ENCODE measurements at regions of chr11 and their contacts with region 1.

Region 1: DNA sequence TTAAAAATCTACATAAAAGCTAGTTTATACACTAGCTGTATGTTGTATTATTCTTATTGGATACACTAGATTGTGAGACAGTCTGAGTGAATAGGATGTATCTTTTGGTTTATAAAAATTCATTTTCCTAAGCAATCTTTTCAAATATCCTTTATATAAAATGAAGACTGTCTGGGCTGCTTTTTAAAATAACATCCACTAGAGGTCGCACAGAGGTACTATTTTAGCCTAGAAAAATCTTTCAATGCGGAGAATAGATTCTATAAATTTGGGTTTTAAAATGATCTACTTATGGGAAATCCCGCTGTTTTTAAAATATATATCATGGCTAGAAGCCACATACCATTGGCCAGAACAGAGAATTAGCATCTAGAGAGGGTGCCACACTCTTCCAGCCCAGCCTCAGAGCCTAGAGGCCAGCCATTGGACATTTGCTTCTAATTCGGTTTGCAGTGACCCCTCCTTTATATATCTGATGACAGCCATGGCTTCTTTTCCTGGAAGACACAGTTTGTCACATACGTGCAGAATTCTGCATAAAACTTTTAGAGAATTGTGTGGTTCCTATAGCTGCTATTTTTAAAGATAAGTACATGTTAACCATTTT is 7.3 kb downstream of the C11orf97 start:
- DNase-seq: peak in 4 of 9 donors; percentile 18 to 41 (median 26)
- ATAC-seq: peak; percentile 70
- H3K4me3 ChIP-seq: no peak overlapping the region
- H3K4me3 Mint-ChIP-seq: no peak overlapping the region
- H3K27ac ChIP-seq: no peak overlapping the region
- H3K27ac Mint-ChIP-seq: no peak overlapping the region
- H3K4me1 ChIP-seq: no peaks in the 10 kb centered on the region
- H3K4me1 Mint-ChIP-seq: no peaks in the 10 kb centered on the region
- H3K27me3 ChIP-seq: no peaks in the 10 kb centered on the region
- H3K27me3 Mint-ChIP-seq: peaks cover 15 to 40% (median 21%) of the 10 kb centered on the region in 5 donors

Region 2: GRCh38 chr11:93668171-93668570 is 851.4 kb before region 1 on chr11:
- CTCF ChIA-PET with region 1: no interaction called
- POLR2A ChIA-PET with region 1: no interaction called
- intact Hi-C with region 1: no loop called
- DNase-seq: no peak
- ATAC-seq: no peak
- H3K4me3 ChIP-seq: no peak overlapping the region
- H3K4me3 Mint-ChIP-seq: no peak overlapping the region
- H3K27ac ChIP-seq: no peak overlapping the region
- H3K27ac Mint-ChIP-seq: peak overlapping the region in 2 of 9 donors; percentile 18 to 25
- H3K4me1 ChIP-seq: no peaks in the 10 kb centered on the region
- H3K4me1 Mint-ChIP-seq: peaks cover 5 to 34% (median 17%) of the 10 kb centered on the region in 7 donors
- H3K27me3 ChIP-seq: no peaks in the 10 kb centered on the region
- H3K27me3 Mint-ChIP-seq: no peaks in the 10 kb centered on the region

Region 3: GRCh38 chr11:94543695-94544645 is 24.4 kb after region 1 on chr11 and contains the start of gene FUT4:
- CTCF ChIA-PET with region 1: no interaction called
- POLR2A ChIA-PET with region 1: no interaction called
- intact Hi-C with region 1: loop called (anchors 1 to 2 kb)
- DNase-seq: peak; percentile 51 to 83 (median 70)
- ATAC-seq: peak; percentile 84
- H3K4me3 ChIP-seq: peak within 1 kb of the TSS; percentile 85
- H3K4me3 Mint-ChIP-seq: peak within 1 kb of the TSS; percentile 93 to 100 (median 98)
- H3K27ac ChIP-seq: peak within 1 kb of the TSS; percentile 88
- H3K27ac Mint-ChIP-seq: peak within 1 kb of the TSS; percentile 96 to 100 (median 99)
- H3K4me1 ChIP-seq: peaks cover 22 to 29% of the 10 kb centered on the region in 2 donors
- H3K4me1 Mint-ChIP-seq: peaks cover 24 to 49% (median 41%) of the 10 kb centered on the region in 7 donors
- H3K27me3 ChIP-seq: no peaks in the 10 kb centered on the region
- H3K27me3 Mint-ChIP-seq: no peaks in the 10 kb centered on the region
- total RNA-seq, gene FUT4: 5.6 to 10.2 (median 6.9) TPM

Region 4: DNA sequence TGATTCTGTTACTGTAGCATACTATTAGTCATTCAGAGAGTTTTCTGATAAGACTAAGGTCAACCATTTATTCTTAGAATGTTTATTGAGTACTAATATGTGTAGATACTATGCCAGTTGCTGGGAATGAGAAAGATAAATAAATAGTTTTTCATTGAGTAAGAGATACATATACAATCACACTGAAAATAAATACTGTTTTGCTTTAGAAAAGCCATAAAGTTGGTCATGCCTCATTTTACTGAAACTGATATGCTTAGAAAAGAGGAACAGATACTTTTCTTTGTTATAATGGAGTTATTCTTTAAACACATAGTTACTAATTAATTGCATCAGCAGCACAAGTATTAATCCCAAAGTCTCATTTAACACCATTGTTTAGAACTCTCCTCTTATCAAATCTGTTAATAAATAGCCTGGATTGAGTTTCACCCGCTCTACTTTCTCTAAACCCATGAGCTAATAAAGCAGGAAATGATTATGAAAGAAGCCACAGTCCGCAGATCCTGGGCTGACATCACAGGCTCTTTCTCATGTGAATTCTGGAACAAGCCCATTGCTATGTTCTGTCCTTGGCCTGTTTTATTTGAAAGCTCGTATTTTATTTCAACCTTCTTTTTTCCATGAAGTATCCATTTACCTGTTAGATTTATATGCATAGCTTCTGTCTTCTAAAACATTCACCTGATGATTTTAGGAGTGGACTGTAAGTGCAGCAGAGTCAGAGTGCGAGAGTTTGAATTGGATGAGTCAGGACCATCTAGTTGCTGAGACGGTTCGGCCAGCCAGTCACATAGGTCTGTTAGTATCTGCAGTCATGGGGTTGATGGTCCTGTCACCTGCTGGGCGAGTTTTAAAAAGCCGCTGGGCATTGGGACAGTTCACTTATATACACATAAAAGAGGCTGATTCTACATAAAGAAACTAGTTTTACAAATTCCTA is 83.1 kb after region 1 on chr11:
- CTCF ChIA-PET with region 1: no interaction called
- POLR2A ChIA-PET with region 1: no interaction called
- intact Hi-C with region 1: loop called (anchors 1 kb)
- DNase-seq: peak in 4 of 9 donors; percentile 6 to 29 (median 20)
- ATAC-seq: peak; percentile 91
- H3K4me3 ChIP-seq: no peak overlapping the region
- H3K4me3 Mint-ChIP-seq: no peak overlapping the region
- H3K27ac ChIP-seq: no peak overlapping the region
- H3K27ac Mint-ChIP-seq: no peak overlapping the region
- H3K4me1 ChIP-seq: no peaks in the 10 kb centered on the region
- H3K4me1 Mint-ChIP-seq: peaks cover 0 to 5% (median 0%) of the 10 kb centered on the region in 7 donors
- H3K27me3 ChIP-seq: no peaks in the 10 kb centered on the region
- H3K27me3 Mint-ChIP-seq: peaks cover 0 to 10% (median 0%) of the 10 kb centered on the region in 5 donors

Region 5: GRCh38 chr11:95138448-95138847 is 618.9 kb after region 1 on chr11:
- CTCF ChIA-PET with region 1: no interaction called
- POLR2A ChIA-PET with region 1: no interaction called
- intact Hi-C with region 1: loop called in 1 of 2 experiments (anchors 5 kb)
- DNase-seq: no peak
- ATAC-seq: peak; percentile 57
- H3K4me3 ChIP-seq: no peak overlapping the region
- H3K4me3 Mint-ChIP-seq: no peak overlapping the region
- H3K27ac ChIP-seq: no peak overlapping the region
- H3K27ac Mint-ChIP-seq: no peak overlapping the region
- H3K4me1 ChIP-seq: no peaks in the 10 kb centered on the region
- H3K4me1 Mint-ChIP-seq: peaks cover 0 to 9% (median 0%) of the 10 kb centered on the region in 7 donors
- H3K27me3 ChIP-seq: no peaks in the 10 kb centered on the region
- H3K27me3 Mint-ChIP-seq: peaks cover 0 to 10% (median 6%) of the 10 kb centered on the region in 5 donors

Region 6: DNA sequence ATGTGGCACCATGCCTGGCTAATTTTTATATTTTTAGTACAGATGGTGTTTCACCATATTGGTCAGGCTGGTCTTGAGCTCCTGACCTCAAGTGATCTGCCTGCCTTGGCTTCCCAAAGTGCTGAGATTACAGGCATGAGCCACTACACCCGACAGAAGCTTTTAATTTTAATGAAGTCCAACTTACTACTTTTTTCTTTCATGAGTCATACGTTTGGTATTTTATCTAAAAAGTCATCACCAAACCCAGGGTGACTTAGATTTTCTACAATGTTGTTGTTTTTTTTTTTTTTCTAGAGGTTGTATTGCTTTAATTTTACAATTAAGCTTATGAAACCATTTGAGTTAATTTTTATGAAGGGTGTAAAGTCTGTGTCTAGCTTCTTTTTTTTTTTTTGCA is 1905.1 kb after region 1 on chr11:
- CTCF ChIA-PET with region 1: no interaction called
- POLR2A ChIA-PET with region 1: no interaction called
- intact Hi-C with region 1: loop called in 1 of 2 experiments (anchors 1 kb)
- DNase-seq: no peak
- ATAC-seq: no peak
- H3K4me3 ChIP-seq: no peak overlapping the region
- H3K4me3 Mint-ChIP-seq: no peak overlapping the region
- H3K27ac ChIP-seq: no peak overlapping the region
- H3K27ac Mint-ChIP-seq: no peak overlapping the region
- H3K4me1 ChIP-seq: no peaks in the 10 kb centered on the region
- H3K4me1 Mint-ChIP-seq: peaks cover 0 to 6% (median 0%) of the 10 kb centered on the region in 7 donors
- H3K27me3 ChIP-seq: peaks cover 0 to 3% of the 10 kb centered on the region in 2 donors
- H3K27me3 Mint-ChIP-seq: peaks cover 27 to 49% (median 44%) of the 10 kb centered on the region in 5 donors

Measured in naive thymus-derived CD4-positive, alpha-beta T cell (primary cell).